ENCODE measurements at regions of chr22 and their contacts with region 1.

Region 1: DNA sequence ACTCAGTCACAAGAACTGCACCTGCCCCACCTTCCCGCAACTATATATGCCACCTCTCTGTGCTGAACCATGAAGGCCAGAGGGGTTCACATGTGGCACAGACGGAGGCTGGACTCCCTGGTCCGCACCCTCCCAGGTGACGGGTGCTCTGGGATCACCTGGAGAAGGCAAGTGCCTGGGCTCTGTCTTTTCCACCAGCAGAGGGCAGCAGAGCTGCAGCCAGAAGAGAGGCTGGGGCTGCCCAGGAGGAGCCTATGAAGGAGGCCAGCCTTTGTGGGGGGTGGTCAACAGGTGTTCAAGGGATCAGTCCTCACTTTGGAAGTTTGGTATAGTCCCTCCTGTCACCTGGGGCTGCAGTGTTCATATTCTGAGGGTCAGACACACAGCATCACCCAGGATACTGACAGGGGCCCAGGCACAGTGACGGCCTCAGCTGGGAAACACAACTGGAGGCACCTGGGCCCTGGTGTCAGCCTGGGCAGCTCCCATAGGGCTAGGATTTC is 39.2 kb upstream of the IGLL5 start:
- H3K4me3 ChIP-seq: no peak overlapping the region
- H3K27ac ChIP-seq: no peak overlapping the region
- H3K4me1 ChIP-seq: no peaks in the 10 kb centered on the region
- CTCF ChIP-seq: peak; percentile 81

Region 2: GRCh38 chr22:22810018-22810427 is 38.4 kb before region 1 on chr22:
- CTCF ChIA-PET with region 1: interaction called, 17 read pairs
- POLR2A ChIA-PET with region 1: no interaction called
- H3K4me3 ChIP-seq: no peak overlapping the region
- H3K27ac ChIP-seq: no peak overlapping the region
- H3K4me1 ChIP-seq: no peaks in the 10 kb centered on the region
- CTCF ChIP-seq: 0 out of 2 replicates have a peak, but pooled peaks have one; percentile 19

Region 3: GRCh38 chr22:22830193-22830592 is 18.2 kb before region 1 on chr22:
- CTCF ChIA-PET with region 1: interaction called, 13 read pairs
- POLR2A ChIA-PET with region 1: interaction called, 6 read pairs
- H3K4me3 ChIP-seq: no peak overlapping the region
- H3K27ac ChIP-seq: no peak overlapping the region
- H3K4me1 ChIP-seq: no peaks in the 10 kb centered on the region
- CTCF ChIP-seq: no peak

Region 4: DNA sequence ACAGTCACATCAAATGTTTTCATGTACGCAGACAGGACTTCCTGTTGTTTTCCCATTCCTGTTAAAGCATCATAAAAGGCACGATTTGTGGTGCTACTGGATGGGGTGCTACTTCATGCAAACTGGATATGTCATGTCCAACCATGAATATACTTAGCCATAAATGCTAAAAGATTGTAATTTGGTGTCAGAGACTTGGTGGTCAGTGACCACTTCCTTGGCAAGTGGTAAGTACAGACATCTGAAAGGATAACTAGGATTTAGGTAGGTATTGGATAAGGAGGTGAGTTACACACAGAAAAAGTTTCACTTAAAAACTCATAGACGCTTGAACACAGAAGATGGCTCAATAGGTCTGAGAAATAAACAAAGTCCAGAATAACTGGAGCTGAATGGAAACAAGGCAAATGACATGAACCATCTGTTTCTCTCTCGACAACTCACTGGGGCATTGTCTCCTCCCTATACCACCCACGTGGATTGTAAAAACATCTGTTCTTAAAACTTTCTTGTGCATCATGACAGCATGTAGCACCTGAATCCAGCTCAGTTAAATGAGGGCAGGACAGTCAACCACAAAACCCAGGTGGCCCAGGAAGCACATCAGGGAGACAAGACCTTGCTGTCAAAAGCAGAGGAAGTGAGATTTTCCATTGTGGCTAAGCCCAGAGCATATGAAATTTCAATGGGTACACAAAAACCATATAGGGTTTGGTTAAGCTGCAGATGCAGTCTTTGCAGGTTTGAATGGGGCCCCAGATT is 17.1 kb after region 1 on chr22:
- CTCF ChIA-PET with region 1: interaction called, 33 read pairs
- POLR2A ChIA-PET with region 1: no interaction called
- H3K4me3 ChIP-seq: no peak overlapping the region
- H3K27ac ChIP-seq: no peak overlapping the region
- H3K4me1 ChIP-seq: no peaks in the 10 kb centered on the region
- CTCF ChIP-seq: no peak

Region 5: GRCh38 chr22:22877523-22878210 is 29.3 kb after region 1 on chr22:
- CTCF ChIA-PET with region 1: interaction called, 107 read pairs
- POLR2A ChIA-PET with region 1: no interaction called
- H3K4me3 ChIP-seq: no peak overlapping the region
- H3K27ac ChIP-seq: no peak overlapping the region
- H3K4me1 ChIP-seq: no peaks in the 10 kb centered on the region
- CTCF ChIP-seq: peak; percentile 32; the same call in 1 of the 2 replicates

Region 6: DNA sequence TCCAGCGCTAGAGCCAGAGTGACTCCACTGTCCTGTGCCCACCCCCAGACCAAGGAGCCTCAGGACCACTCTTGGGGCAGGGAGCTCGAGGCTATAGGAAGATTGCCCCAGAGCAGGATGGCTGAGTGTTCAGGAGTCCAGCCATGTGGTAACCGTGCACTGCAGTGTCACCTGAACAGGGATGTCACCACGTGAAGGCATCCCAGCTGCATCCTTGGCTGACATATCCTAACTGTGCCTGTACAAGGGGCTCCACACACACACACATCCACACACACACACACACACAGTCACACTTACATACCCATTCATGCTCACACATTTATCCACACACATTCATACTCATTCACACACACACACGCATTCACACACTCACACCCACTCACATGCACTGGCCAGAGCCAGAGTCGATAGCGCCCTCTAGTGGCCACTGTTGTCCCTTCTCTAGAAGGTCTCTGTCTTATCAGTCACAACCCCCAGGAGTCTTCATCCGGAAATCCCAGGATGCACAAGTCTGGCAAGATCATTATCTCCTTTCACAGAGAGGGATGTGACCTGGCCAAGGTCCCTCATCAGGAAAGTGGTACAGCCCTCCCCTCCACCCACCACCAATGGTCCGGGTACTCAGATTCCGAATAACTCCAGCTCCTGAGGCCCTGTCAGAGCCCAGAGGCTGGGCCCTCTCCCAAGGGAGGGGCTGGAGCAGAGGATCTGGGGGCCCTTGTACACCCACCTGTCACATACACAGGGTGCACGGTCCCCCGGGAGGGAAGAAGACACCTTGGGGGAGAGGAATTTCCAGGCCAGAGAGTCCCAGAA is 94.3 kb after region 1 on chr22:
- CTCF ChIA-PET with region 1: interaction called, 11 read pairs
- POLR2A ChIA-PET with region 1: no interaction called
- H3K4me3 ChIP-seq: no peak overlapping the region
- H3K27ac ChIP-seq: no peak overlapping the region
- H3K4me1 ChIP-seq: no peaks in the 10 kb centered on the region
- CTCF ChIP-seq: peak; percentile 89

Measured in HEK293 (cell line).